BJ (cell line): ENCODE measurements at regions of chr6 and their contacts with region 1.

Region 1: GRCh38 chr6:43742931-43743632 is 26.9 kb upstream of the VEGFA start:
- DNase-seq: no peak
- H3K4me3 ChIP-seq: no peak overlapping the region
- H3K27me3 ChIP-seq: peaks cover 10% of the 10 kb centered on the region
- CTCF ChIP-seq: no peak

Region 2: GRCh38 chr6:43758617-43759050 is 15.6 kb after region 1 on chr6:
- CTCF ChIA-PET with region 1: interaction called, 11 read pairs
- POLR2A ChIA-PET with region 1: no interaction called
- DNase-seq: no peak
- H3K4me3 ChIP-seq: no peak overlapping the region
- H3K27me3 ChIP-seq: peaks cover 23% of the 10 kb centered on the region
- CTCF ChIP-seq: peak; percentile 70

Region 3: DNA sequence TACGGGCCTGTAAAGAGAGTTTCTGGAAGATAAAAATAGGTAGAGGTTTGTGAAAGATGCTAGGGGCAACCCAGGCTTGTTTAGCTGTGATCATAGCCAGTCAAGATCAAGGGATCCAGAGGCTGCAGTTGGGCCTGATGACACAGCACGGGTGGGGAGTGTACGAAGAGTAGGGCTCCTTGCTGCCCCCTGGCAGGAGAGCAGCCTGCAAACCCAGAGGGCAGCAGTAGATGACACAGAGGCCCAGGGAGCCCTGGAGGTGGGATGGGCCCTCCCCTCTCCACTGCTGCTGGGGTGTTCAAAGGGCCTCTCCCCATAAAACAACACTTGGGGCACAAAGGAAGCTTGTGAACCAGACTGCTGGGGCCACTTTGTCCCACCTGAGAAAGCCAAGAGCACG is 74.1 kb after region 1 on chr6:
- CTCF ChIA-PET with region 1: no interaction called
- POLR2A ChIA-PET with region 1: no interaction called
- DNase-seq: no peak
- H3K4me3 ChIP-seq: no peak overlapping the region
- H3K27me3 ChIP-seq: no peaks in the 10 kb centered on the region; the same call in 1 of the 2 replicates
- CTCF ChIP-seq: peak; percentile 36; the same call in 1 of the 2 replicates

Region 4: GRCh38 chr6:44096612-44097011 is 353.5 kb after region 1 on chr6:
- CTCF ChIA-PET with region 1: no interaction called
- POLR2A ChIA-PET with region 1: no interaction called
- DNase-seq: no peak
- H3K4me3 ChIP-seq: no peak overlapping the region
- H3K27me3 ChIP-seq: no peaks in the 10 kb centered on the region
- CTCF ChIP-seq: peak; percentile 80